ENCODE measurements at regions of chr2 and their contacts with region 1.

Region 1: GRCh38 chr2:43131024-43131889 is 95.1 kb downstream of the ZFP36L2 start:
- DNase-seq: peak; percentile 94 to 97
- H3K4me3 ChIP-seq: peak overlapping the region; percentile 22; the same call in 1 of the 2 replicates
- H3K27ac ChIP-seq: peak overlapping the region; percentile 66
- H3K4me1 ChIP-seq: peaks cover 55% of the 10 kb centered on the region
- H3K27me3 ChIP-seq: no peaks in the 10 kb centered on the region
- CTCF ChIP-seq: peak; percentile 88

Region 2: GRCh38 chr2:41579806-41580205 is 1551.5 kb before region 1 on chr2:
- CTCF ChIA-PET with region 1: no interaction called
- POLR2A ChIA-PET with region 1: no interaction called
- intact Hi-C with region 1: no loop called
- DNase-seq: no peak
- H3K4me3 ChIP-seq: no peak overlapping the region
- H3K27ac ChIP-seq: no peak overlapping the region
- H3K4me1 ChIP-seq: no peaks in the 10 kb centered on the region
- H3K27me3 ChIP-seq: no peaks in the 10 kb centered on the region
- CTCF ChIP-seq: no peak

Region 3: GRCh38 chr2:42859006-42859552 is 272.2 kb before region 1 on chr2:
- CTCF ChIA-PET with region 1: no interaction called
- POLR2A ChIA-PET with region 1: no interaction called
- intact Hi-C with region 1: loop called (anchors 1 kb)
- DNase-seq: peak; percentile 64 to 65
- H3K4me3 ChIP-seq: no peak overlapping the region
- H3K27ac ChIP-seq: no peak overlapping the region
- H3K4me1 ChIP-seq: no peaks in the 10 kb centered on the region
- H3K27me3 ChIP-seq: no peaks in the 10 kb centered on the region
- CTCF ChIP-seq: peak; percentile 99

Region 4: GRCh38 chr2:43024515-43025011 is 106.7 kb before region 1 on chr2:
- CTCF ChIA-PET with region 1: interaction called, 3 read pairs
- POLR2A ChIA-PET with region 1: no interaction called
- intact Hi-C with region 1: loop called (anchors 1 kb)
- DNase-seq: peak in 1 of 2 experiments; percentile 67
- H3K4me3 ChIP-seq: no peak overlapping the region
- H3K27ac ChIP-seq: no peak overlapping the region
- H3K4me1 ChIP-seq: peaks cover 19% of the 10 kb centered on the region; the same call in 1 of the 2 replicates
- H3K27me3 ChIP-seq: no peaks in the 10 kb centered on the region
- CTCF ChIP-seq: peak; percentile 90

Region 5: GRCh38 chr2:43086451-43087221 is 44.6 kb before region 1 on chr2:
- CTCF ChIA-PET with region 1: no interaction called
- POLR2A ChIA-PET with region 1: no interaction called
- intact Hi-C with region 1: loop called (anchors 1 kb)
- DNase-seq: peak; percentile 88 to 100
- H3K4me3 ChIP-seq: no peak overlapping the region
- H3K27ac ChIP-seq: peak overlapping the region; percentile 85
- H3K4me1 ChIP-seq: peaks cover 68% of the 10 kb centered on the region
- H3K27me3 ChIP-seq: no peaks in the 10 kb centered on the region
- CTCF ChIP-seq: no peak

Region 6: DNA sequence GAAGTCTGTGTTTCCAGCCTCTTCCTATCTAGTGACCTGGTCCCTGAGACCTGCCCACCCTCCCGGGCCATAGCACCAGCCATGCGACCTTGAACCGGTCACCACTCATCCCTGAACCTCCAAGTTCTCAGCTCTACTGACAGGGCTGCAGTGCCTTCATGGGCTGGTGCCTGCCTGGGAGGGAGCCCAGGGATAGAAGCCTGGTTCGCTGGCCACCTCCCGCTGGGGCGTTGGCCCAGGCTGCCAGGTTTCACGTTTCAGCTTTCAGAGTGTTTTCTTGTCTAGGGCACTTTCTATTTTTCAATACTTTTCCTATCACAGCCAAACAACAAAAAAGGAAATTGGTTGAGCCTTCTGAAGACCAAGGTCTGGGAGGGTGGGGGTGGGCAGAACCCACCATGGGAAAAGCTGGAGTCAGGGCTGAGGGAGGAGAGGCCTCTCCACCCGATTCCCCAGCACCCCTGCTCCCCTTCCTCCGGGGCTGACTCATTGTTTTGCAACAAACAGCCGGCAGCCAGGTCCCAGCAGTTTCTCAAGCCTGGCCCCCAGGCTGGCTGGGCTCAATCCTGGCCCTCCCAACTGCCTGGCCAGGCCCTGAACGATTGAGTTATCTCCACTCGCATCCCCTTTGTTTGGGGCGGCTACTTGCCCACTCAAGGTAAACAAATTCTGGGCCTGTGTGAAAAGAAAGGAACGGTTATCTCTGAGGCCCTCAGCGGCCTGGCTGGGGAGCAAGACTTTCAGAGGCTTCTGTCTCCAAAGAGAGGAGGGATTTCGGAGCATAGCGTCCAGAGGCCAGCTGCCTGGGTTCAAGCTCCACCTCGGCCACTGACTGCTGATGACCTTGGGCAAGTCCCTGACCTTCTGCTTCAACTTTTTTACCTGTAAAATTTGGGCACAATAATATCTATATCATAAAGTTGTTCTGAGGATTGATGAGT is 47.6 kb after region 1 on chr2:
- CTCF ChIA-PET with region 1: no interaction called
- POLR2A ChIA-PET with region 1: interaction called, 9 read pairs
- intact Hi-C with region 1: loop called (anchors 1 kb)
- DNase-seq: peak; percentile 90 to 91
- H3K4me3 ChIP-seq: peak overlapping the region; percentile 33; the same call in 1 of the 2 replicates
- H3K27ac ChIP-seq: peak overlapping the region; percentile 88
- H3K4me1 ChIP-seq: peaks cover 95% of the 10 kb centered on the region
- H3K27me3 ChIP-seq: no peaks in the 10 kb centered on the region
- CTCF ChIP-seq: no peak

Region 7: DNA sequence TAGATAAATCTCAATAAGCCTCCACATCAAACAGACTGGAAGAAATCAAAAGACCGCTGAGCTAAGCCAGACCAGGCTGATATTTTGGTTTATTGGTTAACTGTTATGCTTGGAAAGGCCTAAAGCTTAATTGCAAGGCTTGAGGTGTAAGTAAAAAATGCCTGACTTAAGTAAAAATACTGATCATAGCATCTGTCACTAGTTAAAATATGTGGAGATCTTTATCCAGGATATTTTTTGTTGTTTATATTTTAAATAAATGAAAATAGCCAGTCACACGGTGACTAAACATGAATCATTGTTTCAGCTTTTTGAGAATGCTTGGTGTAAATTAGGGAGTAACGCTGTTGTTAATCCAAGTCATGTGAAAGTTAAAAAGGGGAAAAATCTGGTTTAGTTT is 336.6 kb after region 1 on chr2:
- CTCF ChIA-PET with region 1: no interaction called
- POLR2A ChIA-PET with region 1: no interaction called
- intact Hi-C with region 1: loop called (anchors 5 kb)
- DNase-seq: peak in 1 of 2 experiments; percentile 96
- H3K4me3 ChIP-seq: 0 out of 2 replicates have a peak overlapping the region, but pooled peaks have one; percentile 9
- H3K27ac ChIP-seq: peak overlapping the region; percentile 89
- H3K4me1 ChIP-seq: peaks cover 64% of the 10 kb centered on the region
- H3K27me3 ChIP-seq: no peaks in the 10 kb centered on the region
- CTCF ChIP-seq: no peak

Region 8: DNA sequence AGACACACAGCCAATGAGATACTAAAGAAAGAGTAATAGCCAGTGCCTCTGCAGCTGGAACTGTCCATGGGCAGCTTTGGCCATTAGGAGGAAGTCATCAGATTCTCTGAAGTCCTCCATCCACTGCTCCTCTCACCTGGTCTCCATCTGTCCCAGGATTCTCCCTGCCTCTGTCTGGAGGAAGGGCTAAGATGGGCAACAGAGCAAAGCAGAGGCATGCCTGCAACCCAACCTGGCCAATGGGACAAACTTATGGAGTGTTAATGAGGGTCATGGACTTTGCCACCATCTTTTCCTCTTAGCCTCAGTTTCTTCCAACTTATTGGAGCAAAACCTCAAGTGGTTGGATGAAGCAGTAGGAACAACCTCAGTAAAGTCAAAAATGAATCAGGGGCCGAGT is 1718.8 kb after region 1 on chr2:
- CTCF ChIA-PET with region 1: no interaction called
- POLR2A ChIA-PET with region 1: interaction called, 40 read pairs
- intact Hi-C with region 1: no loop called
- DNase-seq: no peak
- H3K4me3 ChIP-seq: no peak overlapping the region
- H3K27ac ChIP-seq: no peak overlapping the region
- H3K4me1 ChIP-seq: 0 out of 2 replicates have a peak, but pooled peaks cover 4% of the 10 kb centered on the region
- H3K27me3 ChIP-seq: no peaks in the 10 kb centered on the region
- CTCF ChIP-seq: no peak

Measured in PC-9 (cell line).